H1 (cell line): ENCODE measurements at regions of chr10 and their contacts with region 1.

Region 1: DNA sequence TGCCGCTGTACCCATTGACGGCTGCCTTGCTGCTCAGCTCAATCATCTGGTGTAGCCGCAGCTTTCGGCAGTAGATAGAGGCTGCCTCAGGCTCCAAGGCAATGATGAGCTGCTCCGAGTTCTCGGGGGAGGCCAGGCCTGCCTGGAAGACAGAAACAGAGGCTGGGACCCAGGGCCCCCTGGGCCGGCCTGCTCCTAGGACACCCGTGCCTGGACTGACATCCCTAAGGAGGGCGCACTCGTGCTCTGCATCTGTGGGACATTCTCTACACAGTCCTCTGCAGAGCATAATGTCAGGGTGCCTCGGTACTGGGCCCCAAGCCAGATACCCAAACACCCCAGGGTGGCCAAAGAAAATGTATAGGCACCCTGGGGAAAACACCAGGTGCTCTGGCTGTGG is 58.5 kb downstream of the HSPA12A start:
- DNase-seq: no peak
- H3K4me3 ChIP-seq: no peak overlapping the region
- H3K27ac ChIP-seq: no peak overlapping the region
- H3K4me1 ChIP-seq: peaks cover 0 to 8% (median 0%) of the 10 kb centered on the region in 4 experiments; a peak in 1 of 7 replicates
- H3K27me3 ChIP-seq: no peaks in the 10 kb centered on the region
- CTCF ChIP-seq: no peak
- EP300 ChIP-seq: no peak
- POLR2A ChIP-seq: no peak
- RAD21 ChIP-seq: no peak; a peak in 1 of 4 replicates

Region 2: DNA sequence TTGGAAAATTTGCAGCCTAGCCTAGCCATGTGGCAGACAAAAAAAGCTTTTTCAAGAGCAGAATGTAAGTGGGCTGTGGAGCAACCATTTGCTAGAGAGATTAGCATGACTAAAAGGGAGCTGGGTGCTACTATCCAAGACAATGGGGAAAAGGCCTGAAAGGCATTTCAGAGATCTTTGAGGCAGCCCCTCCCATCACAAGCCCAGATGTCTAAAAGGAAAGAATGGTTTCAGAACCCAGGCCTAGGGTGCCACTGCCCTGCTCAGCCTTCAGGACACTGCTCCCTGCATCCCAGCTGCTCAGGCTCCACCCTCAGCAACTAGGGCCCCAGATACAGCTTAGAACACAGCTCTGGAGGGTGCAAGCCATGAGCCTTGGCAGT is 231.5 kb before region 1 on chr10:
- CTCF ChIA-PET with region 1: no interaction called
- POLR2A ChIA-PET with region 1: no interaction called
- DNase-seq: peak; percentile 27 to 51
- H3K4me3 ChIP-seq: no peak overlapping the region
- H3K27ac ChIP-seq: no peak overlapping the region
- H3K4me1 ChIP-seq: peaks cover 0 to 3% (median 0%) of the 10 kb centered on the region in 4 experiments; a peak in 1 of 7 replicates
- H3K27me3 ChIP-seq: no peaks in the 10 kb centered on the region
- CTCF ChIP-seq: no peak
- EP300 ChIP-seq: no peak
- POLR2A ChIP-seq: no peak
- RAD21 ChIP-seq: no peak

Region 3: DNA sequence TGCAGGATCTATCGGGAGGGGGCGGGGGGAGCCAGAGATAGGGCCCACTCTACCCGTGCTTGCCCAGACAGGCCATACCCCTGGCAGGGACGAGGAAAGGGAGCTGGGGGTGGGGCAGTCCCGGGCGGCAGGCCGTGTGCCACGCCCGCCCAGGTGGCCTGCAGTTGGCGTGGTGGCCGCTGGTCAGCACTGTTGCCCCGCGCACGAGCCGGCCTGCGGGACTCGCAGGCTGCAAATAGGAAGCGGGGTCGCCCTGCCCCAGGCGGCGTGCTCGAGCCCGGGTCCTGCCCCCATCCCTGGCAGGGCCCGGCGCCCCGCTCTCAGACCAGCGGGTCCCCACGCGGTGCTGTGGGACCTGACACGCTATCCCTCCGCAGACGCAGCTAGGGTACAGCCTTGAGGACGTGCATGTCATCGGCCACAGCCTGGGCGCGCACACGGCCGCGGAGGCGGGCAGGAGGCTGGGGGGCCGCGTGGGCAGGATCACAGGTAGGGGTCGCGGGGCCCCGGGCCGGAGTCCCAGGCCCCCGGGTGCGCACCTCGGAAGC is 56.4 kb before region 1 on chr10:
- CTCF ChIA-PET with region 1: interaction called, 31 read pairs
- POLR2A ChIA-PET with region 1: no interaction called
- DNase-seq: peak; percentile 31 to 67
- H3K4me3 ChIP-seq: peak overlapping the region; percentile 44 to 75 (median 50)
- H3K27ac ChIP-seq: no peak overlapping the region
- H3K4me1 ChIP-seq: no peaks in the 10 kb centered on the region
- H3K27me3 ChIP-seq: peaks cover 0 to 4% (median 0%) of the 10 kb centered on the region in 4 experiments; a peak in 3 of 7 replicates
- CTCF ChIP-seq: peak; percentile 70 to 93 (median 92)
- EP300 ChIP-seq: no peak
- POLR2A ChIP-seq: no peak
- RAD21 ChIP-seq: peak; percentile 80 to 90

Region 4: GRCh38 chr10:116669832-116670644 is 13.8 kb before region 1 on chr10:
- CTCF ChIA-PET with region 1: interaction called, 26 read pairs
- POLR2A ChIA-PET with region 1: interaction called, 4 read pairs
- DNase-seq: peak in 1 of 2 experiments; percentile 80
- H3K4me3 ChIP-seq: peak overlapping the region; percentile 68 to 89 (median 78)
- H3K27ac ChIP-seq: peak overlapping the region; percentile 75; the same call in 1 of the 2 replicates
- H3K4me1 ChIP-seq: peaks cover 0 to 14% (median 11%) of the 10 kb centered on the region in 4 experiments; a peak in 6 of 7 replicates
- H3K27me3 ChIP-seq: no peaks in the 10 kb centered on the region
- CTCF ChIP-seq: no peak
- EP300 ChIP-seq: no peak
- POLR2A ChIP-seq: peak in 1 of 2 experiments; percentile 86; a peak in 2 of 3 replicates
- RAD21 ChIP-seq: no peak

Region 5: GRCh38 chr10:116765547-116766162 is 81.8 kb after region 1 on chr10:
- CTCF ChIA-PET with region 1: interaction called, 30 read pairs
- POLR2A ChIA-PET with region 1: no interaction called
- DNase-seq: peak in 1 of 2 experiments; percentile 78
- H3K4me3 ChIP-seq: no peak overlapping the region
- H3K27ac ChIP-seq: no peak overlapping the region
- H3K4me1 ChIP-seq: peaks cover 0 to 7% (median 0%) of the 10 kb centered on the region in 4 experiments; a peak in 2 of 7 replicates
- H3K27me3 ChIP-seq: no peaks in the 10 kb centered on the region; a peak in 1 of 7 replicates
- CTCF ChIP-seq: peak; percentile 71 to 78 (median 74)
- EP300 ChIP-seq: no peak
- POLR2A ChIP-seq: no peak
- RAD21 ChIP-seq: peak; percentile 66 to 69

Region 6: GRCh38 chr10:116779076-116779687 is 95.4 kb after region 1 on chr10:
- CTCF ChIA-PET with region 1: interaction called, 223 read pairs
- POLR2A ChIA-PET with region 1: no interaction called
- DNase-seq: no peak
- H3K4me3 ChIP-seq: no peak overlapping the region
- H3K27ac ChIP-seq: no peak overlapping the region
- H3K4me1 ChIP-seq: no peaks in the 10 kb centered on the region; a peak in 1 of 7 replicates
- H3K27me3 ChIP-seq: no peaks in the 10 kb centered on the region
- CTCF ChIP-seq: no peak
- EP300 ChIP-seq: no peak
- POLR2A ChIP-seq: no peak
- RAD21 ChIP-seq: no peak